ENCODE measurements at regions of chr1 and their contacts with region 1.

Region 1: GRCh38 chr1:212699104-212699624 is 476 bp downstream of the BATF3 start:
- DNase-seq: peak; percentile 79
- CTCF ChIP-seq: peak; percentile 69

Region 2: GRCh38 chr1:212782422-212783154 is 83.4 kb after region 1 on chr1:
- CTCF ChIA-PET with region 1: interaction called, 13 read pairs
- POLR2A ChIA-PET with region 1: no interaction called
- DNase-seq: no peak
- CTCF ChIP-seq: peak; percentile 54

Measured in GM10248 (cell line).